Sigmoid colon (tissue), 7 donors: ENCODE measurements at regions of chr1 and their contacts with region 1.

Region 1: DNA sequence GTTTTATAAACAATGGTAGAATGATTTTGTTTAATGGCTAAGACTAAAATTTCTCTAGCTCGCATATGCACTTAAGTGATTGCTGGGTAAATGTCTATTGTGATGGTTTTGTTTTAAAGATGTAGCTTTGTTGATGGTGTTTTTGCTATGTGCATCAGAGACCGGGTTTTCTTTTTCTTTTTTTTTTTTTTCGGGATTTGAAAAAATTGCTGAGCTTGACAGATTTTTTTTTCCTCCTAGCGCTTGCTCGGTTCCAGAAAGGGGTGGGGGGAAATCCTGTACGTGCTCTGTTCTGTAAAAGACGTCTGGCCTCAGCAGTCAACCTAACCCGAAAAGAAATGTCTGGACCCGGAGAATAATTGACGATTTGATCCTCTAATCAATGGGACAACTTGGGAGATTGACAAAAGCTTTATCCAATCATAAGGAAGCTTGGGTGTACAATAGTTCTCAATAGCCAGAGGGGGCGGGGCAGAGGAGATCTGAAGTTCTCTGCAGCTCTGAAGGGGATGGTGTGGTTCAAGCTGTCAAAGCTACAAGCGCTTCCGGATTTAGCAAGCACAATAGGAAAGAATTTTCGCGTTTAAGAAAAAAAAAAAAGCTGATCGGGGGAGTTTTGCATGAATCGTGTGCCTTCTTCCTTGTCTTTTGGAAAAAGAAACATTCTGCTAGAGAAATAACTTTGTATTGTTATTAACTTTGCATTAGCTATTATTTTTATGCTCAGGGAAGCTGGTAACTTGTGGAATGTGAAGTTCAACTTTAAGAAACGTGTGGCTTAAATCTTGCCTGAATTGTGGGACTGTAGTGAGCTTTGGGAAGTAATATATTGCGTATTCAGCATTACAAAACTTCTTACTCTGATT is 4.5 kb upstream of the NFIA start:
- DNase-seq: peak; percentile 95
- H3K4me3 ChIP-seq: peak overlapping the region; percentile 45 to 60 (median 54)
- H3K27ac ChIP-seq: peak overlapping the region; percentile 95 to 97 (median 96)
- H3K4me1 ChIP-seq: peaks cover 0 to 46% (median 42%) of the 10 kb centered on the region in 4 donors
- H3K27me3 ChIP-seq: no peaks in the 10 kb centered on the region
- CTCF ChIP-seq: no peak
- EP300 ChIP-seq: no peak
- POLR2A ChIP-seq: no peak

Region 2: DNA sequence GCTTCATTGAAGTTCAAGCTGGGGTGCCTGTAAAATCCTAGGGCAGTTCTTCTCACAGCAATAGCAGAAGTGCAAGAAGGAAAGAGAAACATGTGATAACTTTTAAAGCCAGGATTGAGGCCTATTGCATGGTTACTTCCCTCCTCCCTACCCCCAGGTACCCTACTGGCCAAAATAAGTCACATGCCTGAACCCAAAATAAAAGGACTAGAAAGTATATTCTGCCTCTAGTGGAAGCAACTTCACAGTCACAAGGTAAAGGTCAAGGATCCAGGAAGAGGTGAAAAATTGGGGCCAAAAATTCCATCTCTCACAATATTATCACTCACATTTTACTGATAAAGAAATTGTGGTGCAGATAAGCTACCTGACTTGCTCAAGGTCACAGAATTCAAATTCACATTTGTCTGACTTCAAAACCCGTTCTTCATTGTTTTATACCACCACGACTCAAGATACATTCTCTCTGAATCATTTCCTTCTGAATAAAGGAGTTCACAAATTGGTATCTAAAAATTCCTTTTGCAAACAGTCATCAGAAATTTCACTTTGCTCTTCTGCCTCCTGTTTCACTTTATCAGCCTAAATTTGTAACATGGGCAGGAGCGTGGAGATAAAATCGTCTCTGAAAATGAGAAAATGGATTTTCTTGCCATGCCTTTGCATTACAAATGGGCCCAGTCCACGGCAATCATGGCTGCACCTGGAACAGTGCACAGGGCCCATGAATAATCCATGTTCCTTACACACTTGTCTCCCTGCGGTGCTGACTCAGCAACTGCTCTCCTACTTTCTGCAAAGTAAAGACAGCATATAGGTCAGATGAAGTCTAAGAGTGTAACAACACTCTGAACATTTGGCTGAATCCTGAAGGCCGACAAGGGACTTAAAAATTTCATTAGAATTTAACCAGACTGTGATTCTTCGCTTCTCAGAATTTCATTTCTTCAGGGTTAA is 480.8 kb before region 1 on chr1:
- intact Hi-C with region 1: no loop called
- DNase-seq: no peak
- H3K4me3 ChIP-seq: no peak overlapping the region
- H3K27ac ChIP-seq: no peak overlapping the region
- H3K4me1 ChIP-seq: no peaks in the 10 kb centered on the region
- H3K27me3 ChIP-seq: no peaks in the 10 kb centered on the region
- CTCF ChIP-seq: no peak
- EP300 ChIP-seq: no peak
- POLR2A ChIP-seq: no peak

Region 3: GRCh38 chr1:61049850-61050540 is 27.9 kb before region 1 on chr1:
- intact Hi-C with region 1: loop called (anchors 2 kb)
- DNase-seq: peak; percentile 97
- H3K4me3 ChIP-seq: peak overlapping the region; percentile 66 to 94 (median 90)
- H3K27ac ChIP-seq: peak overlapping the region; percentile 94 to 99 (median 98)
- H3K4me1 ChIP-seq: peaks cover 0 to 41% (median 35%) of the 10 kb centered on the region in 4 donors
- H3K27me3 ChIP-seq: no peaks in the 10 kb centered on the region
- CTCF ChIP-seq: peak; percentile 93 to 96 (median 96)
- EP300 ChIP-seq: no peak
- POLR2A ChIP-seq: peak; percentile 27 to 36

Region 4: GRCh38 chr1:61157468-61157987 is 79.6 kb after region 1 on chr1:
- intact Hi-C with region 1: loop called (anchors 10 kb)
- DNase-seq: no peak
- H3K4me3 ChIP-seq: no peak overlapping the region
- H3K27ac ChIP-seq: peak overlapping the region; percentile 14 to 70 (median 68)
- H3K4me1 ChIP-seq: peaks cover 0 to 73% (median 68%) of the 10 kb centered on the region in 4 donors
- H3K27me3 ChIP-seq: no peaks in the 10 kb centered on the region
- CTCF ChIP-seq: no peak
- EP300 ChIP-seq: no peak
- POLR2A ChIP-seq: no peak

Region 5: GRCh38 chr1:61244114-61244513 is 166.2 kb after region 1 on chr1:
- intact Hi-C with region 1: loop called (anchors 5 kb)
- DNase-seq: no peak
- H3K4me3 ChIP-seq: no peak overlapping the region
- H3K27ac ChIP-seq: peak overlapping the region; percentile 77 to 87 (median 83)
- H3K4me1 ChIP-seq: peaks cover 0 to 66% (median 49%) of the 10 kb centered on the region in 4 donors
- H3K27me3 ChIP-seq: no peaks in the 10 kb centered on the region
- CTCF ChIP-seq: no peak
- EP300 ChIP-seq: no peak
- POLR2A ChIP-seq: no peak

Region 6: GRCh38 chr1:61337981-61338848 is 260.3 kb after region 1 on chr1:
- intact Hi-C with region 1: loop called (anchors 5 kb)
- DNase-seq: peak; percentile 84
- H3K4me3 ChIP-seq: peak overlapping the region in 2 of 4 donors; percentile 5
- H3K27ac ChIP-seq: peak overlapping the region; percentile 64 to 80 (median 78)
- H3K4me1 ChIP-seq: peaks cover 0 to 43% (median 38%) of the 10 kb centered on the region in 4 donors
- H3K27me3 ChIP-seq: no peaks in the 10 kb centered on the region
- CTCF ChIP-seq: peak; percentile 55 to 77 (median 68)
- EP300 ChIP-seq: peak in 1 of 4 donors; percentile 2
- POLR2A ChIP-seq: no peak